ENCODE measurements at regions of chr4 and their contacts with region 1.

Region 1: DNA sequence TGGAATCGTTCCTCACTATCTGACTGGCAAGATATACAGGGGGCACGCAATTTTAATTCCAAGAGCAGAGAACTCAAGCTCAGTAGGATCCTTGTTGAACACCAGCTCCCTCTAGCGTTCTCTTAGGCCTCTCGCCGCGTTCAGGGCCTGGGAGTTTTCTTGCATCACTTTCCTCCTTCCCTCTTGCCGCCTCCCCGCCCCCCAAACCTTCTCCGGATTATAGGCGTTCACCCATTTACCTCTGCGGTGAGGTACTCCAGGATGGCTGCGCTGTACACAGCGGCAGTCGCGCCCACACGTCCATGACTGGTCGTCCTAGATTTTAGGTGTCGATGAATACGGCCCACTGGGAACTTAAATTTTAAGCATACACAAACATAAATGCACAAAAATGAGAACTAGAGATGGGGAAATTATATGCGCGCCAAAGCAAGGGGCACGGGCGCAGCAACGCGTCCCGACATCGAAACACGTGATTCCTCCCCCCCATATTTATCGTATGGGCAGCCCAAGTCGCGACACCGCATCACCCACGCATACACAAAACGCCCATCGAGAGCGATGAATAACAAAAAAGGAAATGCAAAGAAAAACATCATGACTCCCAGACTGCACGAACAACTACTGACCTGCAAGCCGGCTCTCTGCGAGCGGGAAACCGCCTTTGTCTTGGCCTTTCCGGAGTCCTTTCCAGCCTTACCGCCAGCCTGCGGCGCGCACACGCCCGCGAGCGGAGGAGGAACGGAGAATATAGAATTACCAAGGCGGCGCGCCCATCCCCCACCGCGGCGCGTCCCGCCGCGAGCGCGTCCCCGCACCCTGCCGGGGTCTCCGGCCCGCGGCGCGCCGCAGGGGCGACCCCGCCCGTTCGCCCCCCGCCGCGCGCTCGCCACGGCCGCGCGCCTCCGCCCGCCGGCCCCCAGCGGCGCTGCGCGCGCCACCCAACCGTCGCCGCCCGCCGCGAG is 759 bp downstream of the H2AZ1 start:
- DNase-seq: peak; percentile 63 to 90 (median 86)
- ATAC-seq: peak; percentile 49
- H3K4me3 ChIP-seq: peak overlapping the region; percentile 93
- H3K4me3 Mint-ChIP-seq: no peak overlapping the region
- H3K27ac ChIP-seq: peak overlapping the region; percentile 91
- H3K27ac Mint-ChIP-seq: no peak overlapping the region
- H3K4me1 ChIP-seq: peaks cover 34 to 37% of the 10 kb centered on the region in 2 donors
- H3K4me1 Mint-ChIP-seq: peaks cover 18 to 40% (median 31%) of the 10 kb centered on the region in 7 donors
- H3K27me3 ChIP-seq: no peaks in the 10 kb centered on the region
- H3K27me3 Mint-ChIP-seq: no peaks in the 10 kb centered on the region

Region 2: DNA sequence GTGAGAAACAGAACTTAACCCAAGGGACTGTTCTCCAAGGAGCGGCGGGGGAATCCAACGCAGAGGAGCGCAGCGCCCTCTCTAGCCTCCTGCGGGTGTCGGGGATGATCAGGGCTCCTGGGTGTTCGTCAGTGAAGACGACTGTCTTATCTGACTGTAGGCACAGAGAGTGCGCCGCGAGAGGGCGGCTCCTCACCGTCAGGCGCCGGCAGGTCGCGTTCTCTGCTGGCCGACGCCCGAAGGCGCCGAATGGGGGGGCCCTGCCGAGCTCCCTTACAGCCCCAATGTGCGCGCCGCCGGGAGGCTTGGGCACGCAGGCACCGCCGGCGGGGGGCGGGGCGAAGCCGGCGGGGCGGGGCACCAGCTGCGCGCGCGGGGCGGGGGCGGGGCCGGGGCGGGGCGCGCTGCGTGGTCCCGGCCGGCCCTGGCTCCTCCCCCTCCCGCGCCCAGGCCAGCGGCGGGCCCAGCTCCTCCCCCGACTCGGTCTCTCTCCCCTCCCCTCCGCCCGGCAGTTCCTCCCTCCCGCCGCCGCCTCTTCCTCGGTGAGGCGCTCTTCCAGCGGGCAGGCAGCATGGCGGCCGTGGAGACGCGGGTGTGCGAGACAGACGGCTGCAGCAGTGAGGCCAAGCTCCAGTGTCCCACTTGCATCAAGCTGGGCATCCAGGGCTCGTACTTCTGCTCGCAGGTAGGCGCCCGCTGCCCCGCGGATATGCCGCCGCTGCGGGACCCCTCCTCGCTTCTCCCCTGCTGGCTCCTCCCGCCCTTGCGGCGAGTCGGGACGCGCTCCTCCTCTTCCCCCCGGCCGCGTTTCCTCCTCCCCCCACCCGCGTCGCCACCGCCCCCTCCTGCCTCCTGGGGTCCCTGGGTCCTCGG is 953.9 kb before region 1 on chr4 and contains the start of gene METAP1:
- CTCF ChIA-PET with region 1: no interaction called
- POLR2A ChIA-PET with region 1: interaction called, 5 read pairs
- intact Hi-C with region 1: loop called (anchors 1 kb)
- DNase-seq: peak; percentile 94 to 97 (median 96)
- ATAC-seq: peak; percentile 90
- H3K4me3 ChIP-seq: peak within 1 kb of the TSS; percentile 91
- H3K4me3 Mint-ChIP-seq: peak within 1 kb of the TSS; percentile 79 to 98 (median 94)
- H3K27ac ChIP-seq: peak within 1 kb of the TSS; percentile 92
- H3K27ac Mint-ChIP-seq: peak within 1 kb of the TSS; percentile 97 to 99 (median 99)
- H3K4me1 ChIP-seq: peaks cover 10 to 13% of the 10 kb centered on the region in 2 donors
- H3K4me1 Mint-ChIP-seq: peaks cover 28 to 49% (median 42%) of the 10 kb centered on the region in 7 donors
- H3K27me3 ChIP-seq: no peaks in the 10 kb centered on the region
- H3K27me3 Mint-ChIP-seq: no peaks in the 10 kb centered on the region
- total RNA-seq, gene METAP1: 29.1 to 50.7 (median 40.2) TPM

Region 3: DNA sequence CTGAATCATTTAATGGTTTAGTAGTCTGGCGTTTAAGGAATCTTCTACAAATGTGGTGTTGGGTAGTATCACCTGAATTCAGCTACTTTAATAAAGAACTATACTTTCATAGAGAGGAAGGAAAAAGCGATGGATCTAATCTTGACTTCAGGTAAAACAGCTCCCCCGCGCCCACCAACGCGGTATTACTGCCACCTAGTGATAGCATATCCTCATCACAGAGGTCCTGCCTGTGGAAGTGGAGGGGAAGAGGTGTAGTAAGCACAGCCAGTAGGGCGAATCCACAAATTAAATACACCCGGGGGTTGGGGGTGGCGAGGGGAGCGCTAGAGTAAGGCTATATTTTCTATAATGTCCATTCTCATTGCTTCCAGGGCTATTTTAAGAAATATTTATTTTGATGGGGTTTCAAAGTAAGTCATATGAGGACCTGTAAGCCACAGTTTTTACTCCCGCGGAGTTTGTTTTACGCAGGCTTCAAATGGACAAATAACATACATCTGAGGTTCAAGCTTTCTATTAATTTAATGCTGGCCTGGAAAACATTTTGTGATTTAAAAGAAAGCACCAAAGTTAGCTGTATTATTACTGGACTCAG is 141.0 kb before region 1 on chr4:
- CTCF ChIA-PET with region 1: interaction called, 28 read pairs
- POLR2A ChIA-PET with region 1: interaction called, 10 read pairs
- intact Hi-C with region 1: loop called in 1 of 2 experiments (anchors 1 kb)
- DNase-seq: peak; percentile 28 to 78 (median 72)
- ATAC-seq: peak; percentile 92
- H3K4me3 ChIP-seq: no peak overlapping the region
- H3K4me3 Mint-ChIP-seq: no peak overlapping the region
- H3K27ac ChIP-seq: no peak overlapping the region
- H3K27ac Mint-ChIP-seq: no peak overlapping the region
- H3K4me1 ChIP-seq: no peaks in the 10 kb centered on the region
- H3K4me1 Mint-ChIP-seq: peaks cover 4 to 10% (median 5%) of the 10 kb centered on the region in 7 donors
- H3K27me3 ChIP-seq: no peaks in the 10 kb centered on the region
- H3K27me3 Mint-ChIP-seq: peaks cover 0 to 17% (median 7%) of the 10 kb centered on the region in 5 donors

Region 4: DNA sequence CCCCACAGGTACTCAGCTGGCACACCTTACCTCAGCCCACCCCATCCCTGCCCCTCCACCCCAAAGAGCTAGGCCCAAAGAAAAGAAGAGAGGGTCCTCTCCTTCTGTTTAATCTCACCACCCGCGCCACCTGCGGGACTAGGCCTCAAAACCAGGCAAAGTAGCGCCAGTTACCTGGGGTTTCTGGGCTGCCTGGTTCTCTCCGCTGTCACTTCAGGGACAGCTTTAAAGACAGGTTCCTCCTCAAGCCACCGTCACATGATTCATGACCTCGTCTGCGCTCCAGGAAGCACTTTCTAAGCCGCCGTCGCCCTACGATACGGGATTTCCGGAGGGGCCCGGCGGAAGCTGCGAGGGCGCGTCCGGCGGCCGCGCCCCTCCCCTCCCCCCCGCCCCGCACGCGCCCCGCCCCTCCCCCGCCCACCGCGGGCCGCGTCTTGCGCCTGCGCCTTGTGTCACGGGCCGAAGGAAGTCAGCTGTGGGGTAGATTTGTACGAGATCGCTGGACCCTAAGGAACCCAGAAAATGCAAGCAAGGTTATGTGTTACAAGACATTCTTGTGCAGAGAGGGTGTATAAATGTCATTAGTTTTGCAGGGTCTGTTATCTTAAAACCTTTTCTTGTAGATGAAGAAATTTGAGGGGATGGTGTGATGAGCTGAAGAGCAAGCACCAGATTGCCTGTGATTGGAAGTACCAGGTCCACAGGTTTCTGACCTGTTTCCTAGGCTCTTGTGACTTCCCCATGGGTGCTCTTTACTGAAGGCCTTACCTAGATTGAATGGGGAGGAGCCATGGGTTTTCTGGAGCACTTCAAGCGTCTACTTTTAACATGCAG is 54.9 kb before region 1 on chr4 and contains the start of gene LAMTOR3:
- CTCF ChIA-PET with region 1: interaction called, 19 read pairs
- POLR2A ChIA-PET with region 1: interaction called, 80 read pairs
- intact Hi-C with region 1: loop called (anchors 1 kb)
- DNase-seq: peak; percentile 70 to 92 (median 89)
- ATAC-seq: peak; percentile 98
- H3K4me3 ChIP-seq: peak within 1 kb of the TSS; percentile 92
- H3K4me3 Mint-ChIP-seq: peak within 1 kb of the TSS; percentile 96 to 99 (median 98)
- H3K27ac ChIP-seq: peak within 1 kb of the TSS; percentile 96
- H3K27ac Mint-ChIP-seq: peak within 1 kb of the TSS; percentile 96 to 99 (median 98)
- H3K4me1 ChIP-seq: peaks cover 13 to 25% of the 10 kb centered on the region in 2 donors
- H3K4me1 Mint-ChIP-seq: peaks cover 25 to 55% (median 52%) of the 10 kb centered on the region in 7 donors
- H3K27me3 ChIP-seq: no peaks in the 10 kb centered on the region
- H3K27me3 Mint-ChIP-seq: no peaks in the 10 kb centered on the region
- total RNA-seq, gene LAMTOR3: 20.1 to 32.6 (median 27.4) TPM

Region 5: DNA sequence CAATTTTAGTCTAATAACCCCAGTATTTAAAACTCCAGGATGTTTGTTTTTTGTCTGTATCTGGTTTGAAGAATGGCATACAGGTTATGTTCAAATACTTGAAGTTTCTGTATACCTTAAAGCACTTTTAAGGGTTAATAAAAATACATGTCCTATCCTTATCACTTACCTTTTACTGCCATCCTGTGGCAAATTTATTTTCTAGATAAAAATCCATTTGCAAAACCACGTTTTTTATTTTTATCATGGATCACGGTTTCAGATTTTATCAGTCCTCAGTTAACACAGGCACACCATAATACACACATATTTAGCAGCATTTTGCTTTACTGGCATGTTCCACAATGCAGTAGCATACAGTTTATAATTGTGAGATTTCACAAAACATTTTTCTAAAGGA is 114.0 kb after region 1 on chr4:
- CTCF ChIA-PET with region 1: no interaction called
- POLR2A ChIA-PET with region 1: no interaction called
- intact Hi-C with region 1: loop called in 1 of 2 experiments (anchors 2 kb)
- DNase-seq: peak in 5 of 9 donors; percentile 4 to 23 (median 5)
- ATAC-seq: no peak
- H3K4me3 ChIP-seq: no peak overlapping the region
- H3K4me3 Mint-ChIP-seq: no peak overlapping the region
- H3K27ac ChIP-seq: no peak overlapping the region
- H3K27ac Mint-ChIP-seq: no peak overlapping the region
- H3K4me1 ChIP-seq: no peaks in the 10 kb centered on the region
- H3K4me1 Mint-ChIP-seq: peaks cover 0 to 6% (median 0%) of the 10 kb centered on the region in 7 donors
- H3K27me3 ChIP-seq: no peaks in the 10 kb centered on the region
- H3K27me3 Mint-ChIP-seq: peaks cover 4 to 33% (median 22%) of the 10 kb centered on the region in 5 donors

Region 6: GRCh38 chr4:100189820-100190642 is 240.7 kb after region 1 on chr4 and contains the start of gene DDIT4L:
- CTCF ChIA-PET with region 1: no interaction called
- POLR2A ChIA-PET with region 1: no interaction called
- intact Hi-C with region 1: no loop called
- DNase-seq: no peak
- ATAC-seq: peak; percentile 61
- H3K4me3 ChIP-seq: peak within 1 kb of the TSS; percentile 48
- H3K4me3 Mint-ChIP-seq: peak within 1 kb of the TSS; percentile 74 to 86 (median 82)
- H3K27ac ChIP-seq: no peak within 1 kb of the TSS
- H3K27ac Mint-ChIP-seq: peak within 1 kb of the TSS in 1 of 9 donors; percentile 17
- H3K4me1 ChIP-seq: no peaks in the 10 kb centered on the region
- H3K4me1 Mint-ChIP-seq: peaks cover 14 to 19% (median 16%) of the 10 kb centered on the region in 7 donors
- H3K27me3 ChIP-seq: peaks cover 0 to 10% of the 10 kb centered on the region in 2 donors
- H3K27me3 Mint-ChIP-seq: peaks cover 51 to 68% (median 58%) of the 10 kb centered on the region in 5 donors
- total RNA-seq, gene DDIT4L: 1.2 TPM in 1 of 5 experiments, not detected in the others

Region 7: GRCh38 chr4:100517864-100518341 is 568.6 kb after region 1 on chr4 and contains the start of gene EMCN:
- CTCF ChIA-PET with region 1: no interaction called
- POLR2A ChIA-PET with region 1: no interaction called
- intact Hi-C with region 1: no loop called
- DNase-seq: no peak
- ATAC-seq: no peak
- H3K4me3 ChIP-seq: no peak within 1 kb of the TSS
- H3K4me3 Mint-ChIP-seq: no peak within 1 kb of the TSS
- H3K27ac ChIP-seq: no peak within 1 kb of the TSS
- H3K27ac Mint-ChIP-seq: no peak within 1 kb of the TSS
- H3K4me1 ChIP-seq: no peaks in the 10 kb centered on the region
- H3K4me1 Mint-ChIP-seq: no peaks in the 10 kb centered on the region
- H3K27me3 ChIP-seq: no peaks in the 10 kb centered on the region
- H3K27me3 Mint-ChIP-seq: peaks cover 4 to 31% (median 9%) of the 10 kb centered on the region in 5 donors
- total RNA-seq, gene EMCN: not detected

Region 8: DNA sequence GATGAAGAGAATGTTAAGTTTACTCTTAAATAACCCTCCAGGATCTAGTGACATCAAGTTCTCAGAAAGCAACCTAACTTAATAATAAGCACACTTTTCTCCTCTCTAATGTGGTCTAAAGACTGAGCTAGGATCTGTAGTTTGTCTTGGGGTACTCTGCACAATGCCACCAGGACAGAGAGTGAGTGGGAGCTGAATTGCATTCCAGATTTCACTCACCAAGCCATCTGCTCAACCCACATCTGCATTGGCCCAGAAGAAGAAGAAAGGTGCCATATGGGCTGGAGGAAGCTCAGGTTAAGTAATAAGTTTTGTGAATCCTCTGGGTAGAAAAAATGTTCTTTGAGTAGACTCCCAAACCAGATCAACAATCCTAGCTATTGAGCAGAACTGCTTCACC is 1013.4 kb after region 1 on chr4:
- CTCF ChIA-PET with region 1: no interaction called
- POLR2A ChIA-PET with region 1: no interaction called
- intact Hi-C with region 1: no loop called
- DNase-seq: no peak
- ATAC-seq: no peak
- H3K4me3 ChIP-seq: no peak overlapping the region
- H3K4me3 Mint-ChIP-seq: no peak overlapping the region
- H3K27ac ChIP-seq: no peak overlapping the region
- H3K27ac Mint-ChIP-seq: no peak overlapping the region
- H3K4me1 ChIP-seq: no peaks in the 10 kb centered on the region
- H3K4me1 Mint-ChIP-seq: peaks cover 0 to 5% (median 0%) of the 10 kb centered on the region in 7 donors
- H3K27me3 ChIP-seq: no peaks in the 10 kb centered on the region
- H3K27me3 Mint-ChIP-seq: peaks cover 0 to 10% (median 0%) of the 10 kb centered on the region in 5 donors

Measured in naive thymus-derived CD4-positive, alpha-beta T cell (primary cell).